Heart left ventricle (tissue), 16 donors: ENCODE measurements at regions of chr2 and their contacts with region 1.

Region 1: GRCh38 chr2:10832203-10832936 is 19.8 kb upstream of the PDIA6 start:
- DNase-seq: peak; percentile 73 to 89 (median 79)
- ATAC-seq: peak; percentile 69 to 85 (median 84)
- H3K4me3 ChIP-seq: no peak overlapping the region
- H3K27ac ChIP-seq: no peak overlapping the region
- H3K4me1 ChIP-seq: peaks cover 0 to 14% (median 1%) of the 10 kb centered on the region in 12 donors
- H3K27me3 ChIP-seq: peaks cover 6 to 47% (median 13%) of the 10 kb centered on the region in 9 donors
- CTCF ChIP-seq: peak; percentile 92 to 99 (median 96)
- POLR2A ChIP-seq: no peak

Region 2: GRCh38 chr2:10873790-10874437 is 41.5 kb after region 1 on chr2:
- intact Hi-C with region 1: loop called in 1 of 10 experiments (anchors 5 kb)
- DNase-seq: peak; percentile 63 to 80 (median 71)
- ATAC-seq: peak; percentile 92 to 94 (median 92)
- H3K4me3 ChIP-seq: no peak overlapping the region
- H3K27ac ChIP-seq: peak overlapping the region in 11 of 12 donors; percentile 47 to 87 (median 72)
- H3K4me1 ChIP-seq: peaks cover 0 to 62% (median 19%) of the 10 kb centered on the region in 12 donors
- H3K27me3 ChIP-seq: no peaks in the 10 kb centered on the region
- CTCF ChIP-seq: no peak
- POLR2A ChIP-seq: no peak

Region 3: GRCh38 chr2:10911261-10912075 is 79.1 kb after region 1 on chr2 and contains the start of gene KCNF1:
- intact Hi-C with region 1: loop called in 5 of 10 experiments (anchors 5 to 10 kb)
- DNase-seq: no peak
- ATAC-seq: peak in 2 of 4 donors; percentile 10 to 13
- H3K4me3 ChIP-seq: peak within 1 kb of the TSS in 11 of 12 donors; percentile 11 to 54 (median 40)
- H3K27ac ChIP-seq: no peak within 1 kb of the TSS
- H3K4me1 ChIP-seq: peaks cover 0 to 16% (median 0%) of the 10 kb centered on the region in 12 donors
- H3K27me3 ChIP-seq: peaks cover 6 to 50% (median 19%) of the 10 kb centered on the region in 9 donors
- CTCF ChIP-seq: peak in 3 of 12 donors; percentile 16 to 31 (median 20)
- POLR2A ChIP-seq: no peak
- total RNA-seq, gene KCNF1: 0.20 to 0.36 (median 0.28) TPM in 4 of 9 donors, not detected in the others

Region 4: GRCh38 chr2:11028406-11028916 is 196.1 kb after region 1 on chr2:
- intact Hi-C with region 1: loop called in 2 of 10 experiments (anchors 5 kb)
- DNase-seq: no peak
- ATAC-seq: no peak
- H3K4me3 ChIP-seq: no peak overlapping the region
- H3K27ac ChIP-seq: no peak overlapping the region
- H3K4me1 ChIP-seq: no peaks in the 10 kb centered on the region
- H3K27me3 ChIP-seq: no peaks in the 10 kb centered on the region
- CTCF ChIP-seq: peak in 1 of 12 donors; percentile 21
- POLR2A ChIP-seq: no peak

Region 5: GRCh38 chr2:11129598-11130449 is 297.5 kb after region 1 on chr2:
- intact Hi-C with region 1: loop called in 7 of 10 experiments (anchors 2 kb)
- DNase-seq: peak in 3 of 5 donors; percentile 54 to 81 (median 60)
- ATAC-seq: peak in 3 of 4 donors; percentile 29 to 39 (median 37)
- H3K4me3 ChIP-seq: peak overlapping the region in 11 of 12 donors; percentile 1 to 53 (median 43)
- H3K27ac ChIP-seq: peak overlapping the region in 5 of 12 donors; percentile 1 to 66 (median 38)
- H3K4me1 ChIP-seq: peaks cover 0 to 37% (median 20%) of the 10 kb centered on the region in 12 donors
- H3K27me3 ChIP-seq: peaks cover 0 to 3% (median 0%) of the 10 kb centered on the region in 9 donors
- CTCF ChIP-seq: peak in 7 of 12 donors; percentile 10 to 36 (median 18)
- POLR2A ChIP-seq: no peak

Region 6: DNA sequence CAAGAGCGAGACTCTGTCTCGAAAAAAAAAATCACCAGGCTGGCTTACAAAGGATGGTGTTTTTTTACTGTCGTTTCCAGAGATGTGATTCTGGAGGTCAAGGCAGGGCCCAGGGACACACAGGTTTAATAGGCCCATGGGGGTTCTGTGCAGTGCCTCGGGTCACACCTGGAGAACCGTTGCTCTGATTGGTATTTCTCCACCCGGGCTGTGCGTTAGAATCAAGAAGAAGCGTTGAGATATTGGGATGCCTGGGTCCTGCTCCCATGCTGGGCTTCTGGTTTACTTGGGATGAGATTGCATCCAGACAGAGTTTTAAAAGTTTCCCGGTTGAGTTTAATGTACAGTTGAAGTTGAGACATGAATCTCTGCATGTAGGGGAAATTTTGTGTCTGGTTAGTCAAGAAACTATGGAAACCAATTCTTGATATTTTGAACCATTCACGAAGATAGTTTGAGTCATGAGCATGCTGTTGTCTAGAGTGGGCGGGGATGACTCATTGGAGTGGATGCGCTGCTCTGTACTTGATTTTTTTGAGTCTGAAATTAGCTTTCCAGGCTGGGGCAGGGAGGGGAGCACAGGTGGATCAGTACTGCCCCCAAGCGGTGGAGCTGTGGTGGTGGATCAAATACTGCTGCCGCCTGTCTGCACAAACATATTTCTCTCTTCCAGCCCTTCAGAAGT is 751.6 kb after region 1 on chr2:
- intact Hi-C with region 1: loop called in 1 of 10 experiments (anchors 10 kb)
- DNase-seq: peak in 4 of 5 donors; percentile 64 to 80 (median 74)
- ATAC-seq: peak; percentile 38 to 86 (median 74)
- H3K4me3 ChIP-seq: no peak overlapping the region
- H3K27ac ChIP-seq: peak overlapping the region in 7 of 12 donors; percentile 11 to 74 (median 34)
- H3K4me1 ChIP-seq: peaks cover 0 to 18% (median 6%) of the 10 kb centered on the region in 12 donors
- H3K27me3 ChIP-seq: no peaks in the 10 kb centered on the region
- CTCF ChIP-seq: peak; percentile 58 to 83 (median 76)
- POLR2A ChIP-seq: no peak